CD4-positive, alpha-beta T cell (primary cell): ENCODE measurements at regions of chr10 and their contacts with region 1.

Region 1: DNA sequence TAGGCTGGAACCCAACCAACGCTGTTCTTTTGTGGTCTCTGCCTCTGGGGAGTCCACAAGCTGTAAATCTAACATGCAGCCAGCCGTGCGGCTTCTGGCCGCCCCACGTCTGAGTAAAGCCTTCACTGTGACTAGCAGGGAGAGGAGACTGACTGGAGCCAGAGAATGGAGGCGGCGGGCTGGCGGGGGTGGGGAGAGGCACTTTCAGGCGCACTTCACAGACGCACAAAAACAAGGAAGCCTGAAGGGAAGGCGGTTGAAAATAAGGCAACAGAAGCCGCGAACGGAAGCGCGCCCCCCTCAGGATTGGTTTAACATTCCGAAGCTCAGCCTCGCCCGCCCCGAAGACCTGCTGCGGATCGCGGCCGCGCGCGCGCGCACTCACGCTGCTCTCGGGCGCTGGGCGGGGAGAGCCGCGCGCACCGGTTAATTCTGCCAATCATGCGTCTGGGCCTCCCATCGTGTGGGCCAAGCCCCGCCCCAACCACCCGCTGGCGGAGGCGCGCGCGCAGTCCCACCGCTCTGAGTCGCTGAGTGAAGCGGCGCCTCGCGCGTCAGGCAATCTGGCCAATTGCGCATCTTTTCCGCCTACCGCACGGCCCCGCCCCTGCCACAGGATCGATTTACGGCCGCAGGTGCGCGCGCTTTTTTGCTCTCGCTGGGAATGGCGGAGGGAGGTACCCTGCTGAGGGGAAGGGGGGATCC is at the start of gene SFR1:
- DNase-seq: peak; percentile 97 to 100 (median 99)
- ATAC-seq: peak; percentile 89
- H3K4me3 ChIP-seq: peak within 1 kb of the TSS; percentile 94
- H3K4me3 Mint-ChIP-seq: peak within 1 kb of the TSS; percentile 97
- H3K27ac ChIP-seq: peak within 1 kb of the TSS; percentile 96 to 100
- H3K27ac Mint-ChIP-seq: peak within 1 kb of the TSS; percentile 100
- H3K4me1 ChIP-seq: peaks cover 10% of the 10 kb centered on the region
- H3K4me1 Mint-ChIP-seq: peaks cover 37% of the 10 kb centered on the region
- H3K27me3 ChIP-seq: no peaks in the 10 kb centered on the region
- H3K27me3 Mint-ChIP-seq: no peaks in the 10 kb centered on the region
- CTCF ChIP-seq: peak; percentile 58
- total RNA-seq, gene SFR1: 7.2 to 7.7 TPM

Region 2: GRCh38 chr10:103584216-103585010 is 537.3 kb before region 1 on chr10:
- CTCF ChIA-PET with region 1: no interaction called
- POLR2A ChIA-PET with region 1: interaction called, 12 read pairs
- intact Hi-C with region 1: loop called (anchors 5 kb)
- DNase-seq: peak; percentile 50 to 93 (median 74)
- ATAC-seq: peak; percentile 70
- H3K4me3 ChIP-seq: peak overlapping the region; percentile 68
- H3K4me3 Mint-ChIP-seq: peak overlapping the region; percentile 96
- H3K27ac ChIP-seq: peak overlapping the region; percentile 53
- H3K27ac Mint-ChIP-seq: peak overlapping the region; percentile 96
- H3K4me1 ChIP-seq: peaks cover 13% of the 10 kb centered on the region
- H3K4me1 Mint-ChIP-seq: peaks cover 11% of the 10 kb centered on the region
- H3K27me3 ChIP-seq: no peaks in the 10 kb centered on the region
- H3K27me3 Mint-ChIP-seq: no peaks in the 10 kb centered on the region
- CTCF ChIP-seq: no peak

Region 3: DNA sequence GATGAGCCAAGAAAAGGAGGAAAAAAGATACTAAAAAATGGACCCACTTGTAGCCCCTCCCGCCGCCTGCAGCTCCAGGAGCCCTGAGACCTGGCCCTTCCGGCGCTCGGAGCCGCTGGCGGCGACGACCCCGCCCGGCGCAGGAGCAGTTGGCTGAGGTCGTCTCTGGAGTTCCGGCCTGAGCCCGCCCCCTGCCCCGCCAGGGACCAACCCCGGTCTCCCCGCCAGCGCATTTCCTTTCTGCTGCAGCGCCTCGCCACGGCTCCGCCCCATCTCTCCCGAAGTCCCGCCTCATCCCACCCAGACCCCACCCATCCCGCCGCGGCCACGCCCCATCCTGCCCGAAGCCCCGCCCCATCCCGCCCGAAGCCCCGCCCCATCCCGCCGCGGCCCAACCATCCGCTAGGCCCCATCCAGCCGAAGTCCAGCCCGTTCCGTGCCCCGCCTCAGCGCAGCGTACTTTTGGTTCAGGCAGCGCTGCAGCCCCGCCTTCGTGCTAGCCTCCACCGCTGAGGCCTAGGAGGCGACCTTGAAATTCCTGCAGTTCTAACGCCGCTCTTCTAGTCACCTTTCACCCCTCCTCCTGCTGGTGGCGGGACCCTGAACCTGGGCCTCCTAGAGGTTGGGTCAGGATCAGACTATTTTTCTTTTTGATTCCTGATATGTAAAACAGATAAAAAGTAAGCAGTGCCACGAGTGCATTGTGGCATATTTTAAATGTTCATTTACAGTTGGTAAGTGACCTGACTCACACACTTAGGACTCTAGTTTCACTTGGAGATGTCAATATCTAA is 203.4 kb before region 1 on chr10 and contains the start of gene STN1:
- CTCF ChIA-PET with region 1: interaction called, 3 read pairs
- POLR2A ChIA-PET with region 1: interaction called, 22 read pairs
- intact Hi-C with region 1: loop called (anchors 1 to 2 kb)
- DNase-seq: peak; percentile 88 to 97 (median 95)
- ATAC-seq: peak; percentile 93
- H3K4me3 ChIP-seq: peak within 1 kb of the TSS; percentile 83
- H3K4me3 Mint-ChIP-seq: peak within 1 kb of the TSS; percentile 94
- H3K27ac ChIP-seq: peak within 1 kb of the TSS; percentile 79 to 81
- H3K27ac Mint-ChIP-seq: peak within 1 kb of the TSS; percentile 93
- H3K4me1 ChIP-seq: peaks cover 56% of the 10 kb centered on the region
- H3K4me1 Mint-ChIP-seq: peaks cover 47% of the 10 kb centered on the region
- H3K27me3 ChIP-seq: no peaks in the 10 kb centered on the region
- H3K27me3 Mint-ChIP-seq: no peaks in the 10 kb centered on the region
- CTCF ChIP-seq: peak; percentile 20
- total RNA-seq, gene STN1: 13.0 to 13.4 TPM

Region 4: DNA sequence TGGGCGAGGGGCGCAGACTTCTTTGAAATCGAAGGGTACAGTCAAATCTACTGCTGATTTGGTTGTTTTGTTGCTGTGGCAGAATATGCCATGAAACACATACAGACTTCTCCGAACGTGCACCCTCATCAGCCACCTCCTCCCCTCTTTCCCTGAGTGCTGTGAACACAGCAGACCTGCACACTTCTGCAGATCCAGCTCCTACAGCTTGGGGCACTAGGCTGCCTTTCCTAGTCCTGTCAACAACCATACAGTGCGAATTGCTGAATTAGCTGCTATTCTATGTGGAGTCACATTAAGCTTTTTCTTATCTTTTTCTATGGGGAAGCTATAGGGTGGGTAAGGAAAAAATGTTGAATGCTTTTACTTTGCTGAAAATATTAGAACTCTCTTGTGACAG is 93.5 kb before region 1 on chr10:
- CTCF ChIA-PET with region 1: interaction called, 3 read pairs
- POLR2A ChIA-PET with region 1: no interaction called
- intact Hi-C with region 1: loop called in 1 of 2 experiments (anchors 1 kb)
- DNase-seq: peak in 7 of 14 experiments; percentile 11 to 57 (median 23)
- ATAC-seq: peak; percentile 98
- H3K4me3 ChIP-seq: no peak overlapping the region
- H3K4me3 Mint-ChIP-seq: no peak overlapping the region
- H3K27ac ChIP-seq: no peak overlapping the region
- H3K27ac Mint-ChIP-seq: peak overlapping the region; percentile 50
- H3K4me1 ChIP-seq: no peaks in the 10 kb centered on the region
- H3K4me1 Mint-ChIP-seq: peaks cover 5% of the 10 kb centered on the region
- H3K27me3 ChIP-seq: no peaks in the 10 kb centered on the region
- H3K27me3 Mint-ChIP-seq: no peaks in the 10 kb centered on the region
- CTCF ChIP-seq: no peak

Region 5: DNA sequence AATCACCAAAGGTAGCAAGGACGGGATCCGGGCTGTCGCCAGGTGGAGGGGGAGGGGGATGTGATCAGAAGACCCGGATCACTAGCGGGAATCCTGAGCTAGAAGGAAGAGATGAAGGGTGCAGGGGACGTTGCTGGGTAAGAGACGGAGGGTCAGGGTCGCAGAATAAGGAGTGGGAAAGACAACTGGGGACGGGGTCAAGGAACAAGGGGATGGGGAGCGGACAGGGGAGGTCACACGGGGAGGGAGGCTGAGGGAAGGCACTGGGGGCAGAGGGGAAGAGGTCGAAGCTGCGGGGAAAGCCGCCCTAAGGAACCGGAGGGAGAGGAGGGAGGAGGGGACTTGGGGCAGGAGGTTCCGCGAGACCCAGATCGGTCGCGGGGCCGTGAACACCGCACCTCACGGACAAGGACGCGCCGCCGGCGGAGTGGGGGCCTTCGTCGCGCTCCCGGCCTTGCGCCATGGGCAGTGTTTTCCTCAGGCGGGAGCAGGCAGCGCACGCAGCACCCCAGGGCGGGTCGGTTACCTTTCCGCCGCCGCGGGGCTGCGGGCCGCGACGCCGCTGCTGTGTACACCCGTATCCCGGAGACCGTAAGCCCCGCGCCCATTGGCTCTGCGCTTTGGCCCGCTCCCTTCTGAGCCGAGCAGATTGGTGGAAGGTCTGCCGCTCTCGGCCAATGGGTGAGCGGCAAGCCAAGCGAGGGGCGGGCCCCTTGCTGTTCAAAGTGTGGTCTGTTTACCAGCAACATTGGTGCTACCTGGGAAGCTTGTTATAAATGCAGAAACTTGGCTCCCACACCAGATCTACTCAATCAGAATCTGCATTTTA is 110.3 kb after region 1 on chr10 and contains the start of gene CFAP43:
- CTCF ChIA-PET with region 1: interaction called, 3 read pairs
- POLR2A ChIA-PET with region 1: no interaction called
- intact Hi-C with region 1: loop called (anchors 2 to 5 kb)
- DNase-seq: peak; percentile 99 to 100 (median 99)
- ATAC-seq: peak; percentile 99
- H3K4me3 ChIP-seq: peak within 1 kb of the TSS; percentile 74
- H3K4me3 Mint-ChIP-seq: peak within 1 kb of the TSS; percentile 96
- H3K27ac ChIP-seq: no peak within 1 kb of the TSS
- H3K27ac Mint-ChIP-seq: peak within 1 kb of the TSS; percentile 83
- H3K4me1 ChIP-seq: peaks cover 13% of the 10 kb centered on the region
- H3K4me1 Mint-ChIP-seq: peaks cover 14% of the 10 kb centered on the region
- H3K27me3 ChIP-seq: peaks cover 6 to 9% of the 10 kb centered on the region in 2 experiments
- H3K27me3 Mint-ChIP-seq: peaks cover 33% of the 10 kb centered on the region
- CTCF ChIP-seq: no peak
- total RNA-seq, gene CFAP43: not detected